Activated CD8-positive, alpha-beta memory T cell treated with anti-CD3 and anti-CD28 coated beads, Interleukin-2, amount 10 ng/mL, durations not matched to agents 7 days and 5 days (primary cell): ENCODE measurements at regions of chr12 and their contacts with region 1.

Region 1: DNA sequence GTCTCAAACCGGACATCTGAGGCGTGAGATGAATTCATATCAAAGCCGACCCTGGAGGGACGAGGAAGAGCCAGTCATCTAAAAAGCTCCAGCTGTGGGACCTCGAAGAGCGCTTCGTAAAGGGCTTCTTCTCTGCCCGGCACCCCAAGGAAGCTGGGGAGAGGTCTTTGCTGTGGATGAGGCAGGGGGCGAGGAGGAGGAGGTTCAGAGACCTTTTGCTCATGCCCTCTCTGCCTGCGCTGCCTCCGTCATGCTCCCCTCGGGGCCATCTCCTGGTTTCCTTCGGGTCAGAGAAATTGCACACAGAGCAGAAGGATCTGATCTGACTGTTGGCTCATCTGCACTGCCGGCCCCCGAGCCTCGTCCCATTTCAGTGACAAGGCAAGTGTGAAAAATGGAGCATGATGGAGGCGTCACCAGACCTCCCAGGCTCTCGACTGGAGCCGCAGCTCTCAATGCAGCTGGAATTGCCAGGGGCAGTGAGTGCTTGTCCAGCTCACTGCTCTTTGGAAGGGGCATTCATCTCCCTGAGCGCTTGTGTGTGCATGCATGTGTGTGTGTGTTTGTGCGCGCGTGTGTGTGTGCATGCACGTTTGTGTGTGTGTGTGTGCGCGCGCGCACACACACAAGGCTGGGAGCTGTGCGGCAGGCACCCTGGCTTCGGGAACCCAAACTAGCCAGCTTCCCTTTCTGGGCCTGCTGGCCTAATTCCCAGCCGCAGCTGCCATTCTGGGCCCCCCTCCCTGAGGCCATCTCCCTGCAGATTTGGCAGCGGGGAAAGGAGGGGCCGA is 9.2 kb downstream of the CABP1 start:
- DNase-seq: no peak
- ATAC-seq: no peak
- H3K4me3 Mint-ChIP-seq: peak overlapping the region; percentile 30
- H3K27ac Mint-ChIP-seq: no peak overlapping the region
- H3K4me1 Mint-ChIP-seq: peaks cover 20% of the 10 kb centered on the region
- H3K27me3 Mint-ChIP-seq: peaks cover 64% of the 10 kb centered on the region

Region 2: DNA sequence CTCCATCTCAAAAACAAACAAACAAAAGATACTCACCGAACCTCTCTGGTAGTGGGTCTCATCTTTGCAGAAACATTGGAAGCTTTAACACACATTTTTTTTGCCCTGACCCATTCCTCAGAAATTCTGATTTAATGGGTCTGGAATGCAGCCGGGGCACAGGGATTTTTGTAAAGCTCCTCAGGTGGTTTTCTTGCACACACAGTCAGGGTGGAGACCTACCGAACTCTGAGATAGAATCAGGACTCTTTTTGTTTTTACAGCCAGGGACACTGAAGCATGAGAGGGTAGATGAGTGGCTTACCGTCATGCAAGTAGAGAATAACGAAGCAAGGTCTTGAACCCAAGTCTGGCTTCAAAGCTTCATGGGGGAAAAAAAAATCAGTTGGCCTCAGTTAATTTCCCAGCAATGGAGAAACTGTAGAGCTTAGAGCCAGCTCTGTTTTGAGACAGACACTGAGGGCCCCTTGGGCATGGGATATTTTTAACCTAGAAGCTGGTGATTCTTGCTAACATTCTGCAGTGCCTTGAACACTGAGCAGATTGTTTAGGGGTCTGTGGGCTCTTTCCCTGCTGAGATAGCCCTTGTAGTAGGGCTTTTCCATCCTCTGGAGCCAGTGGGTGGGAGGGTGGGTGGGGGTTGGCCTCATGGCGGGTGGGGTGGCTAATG is 362.7 kb before region 1 on chr12:
- CTCF ChIA-PET with region 1: no interaction called
- DNase-seq: no peak
- ATAC-seq: no peak
- H3K4me3 Mint-ChIP-seq: no peak overlapping the region
- H3K27ac Mint-ChIP-seq: no peak overlapping the region
- H3K4me1 Mint-ChIP-seq: peaks cover 11% of the 10 kb centered on the region
- H3K27me3 Mint-ChIP-seq: peaks cover 12% of the 10 kb centered on the region

Region 3: DNA sequence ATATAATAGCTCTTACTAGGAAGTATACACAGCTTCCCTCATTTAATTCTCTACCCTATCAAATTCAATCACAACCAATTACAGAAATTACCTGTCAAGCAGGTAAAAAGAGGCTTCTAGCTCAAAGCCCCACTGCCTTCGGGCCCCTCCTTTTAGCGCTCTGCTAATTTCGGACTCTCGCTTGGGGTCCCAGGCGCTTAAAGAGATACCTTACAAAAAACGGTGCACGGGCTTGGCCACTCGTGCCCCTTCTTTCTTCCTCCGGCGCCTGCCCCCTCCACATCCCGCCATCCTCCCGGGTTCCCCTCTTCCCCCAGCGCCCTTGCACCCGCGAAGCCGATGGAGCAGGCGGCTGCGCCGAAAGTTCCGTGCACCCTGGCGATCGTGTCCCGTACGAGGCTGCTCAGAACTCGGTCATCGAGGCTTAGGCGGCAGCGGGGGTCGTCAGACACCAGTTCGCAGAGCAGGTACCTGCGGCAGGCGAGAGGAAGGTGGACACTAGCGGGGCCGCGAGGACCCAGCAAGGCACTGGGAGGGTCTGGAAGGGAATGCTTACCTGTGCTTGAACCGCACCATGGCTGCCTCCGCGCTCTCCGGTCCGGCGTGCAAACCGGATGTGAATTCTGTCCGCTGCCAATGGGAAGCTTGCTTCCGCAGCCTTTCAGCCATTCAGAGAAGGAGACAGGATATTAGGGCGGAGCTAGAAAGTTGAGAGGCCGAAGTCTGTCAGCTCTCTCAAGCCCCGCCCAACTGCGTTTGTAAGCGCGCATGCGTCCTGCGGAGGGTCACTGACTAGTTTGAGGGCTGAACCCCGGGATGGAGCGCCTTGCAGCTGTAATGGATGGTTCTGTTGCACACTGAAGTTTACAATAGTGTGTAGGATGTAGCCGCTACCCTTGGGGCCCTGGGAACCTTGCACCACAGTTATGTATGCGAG is 68.6 kb before region 1 on chr12 and contains the start of gene POP5:
- CTCF ChIA-PET with region 1: interaction called, 114 read pairs
- DNase-seq: peak; percentile 98
- ATAC-seq: peak; percentile 97
- H3K4me3 Mint-ChIP-seq: peak within 1 kb of the TSS; percentile 99
- H3K27ac Mint-ChIP-seq: peak within 1 kb of the TSS; percentile 84
- H3K4me1 Mint-ChIP-seq: peaks cover 34% of the 10 kb centered on the region
- H3K27me3 Mint-ChIP-seq: peaks cover 14% of the 10 kb centered on the region
- total RNA-seq, gene POP5: 63.1 to 65.1 TPM

Region 4: GRCh38 chr12:120662879-120663278 is 13.2 kb after region 1 on chr12:
- CTCF ChIA-PET with region 1: interaction called, 47 read pairs
- DNase-seq: no peak
- ATAC-seq: no peak
- H3K4me3 Mint-ChIP-seq: no peak overlapping the region
- H3K27ac Mint-ChIP-seq: no peak overlapping the region
- H3K4me1 Mint-ChIP-seq: no peaks in the 10 kb centered on the region
- H3K27me3 Mint-ChIP-seq: peaks cover 2% of the 10 kb centered on the region

Region 5: DNA sequence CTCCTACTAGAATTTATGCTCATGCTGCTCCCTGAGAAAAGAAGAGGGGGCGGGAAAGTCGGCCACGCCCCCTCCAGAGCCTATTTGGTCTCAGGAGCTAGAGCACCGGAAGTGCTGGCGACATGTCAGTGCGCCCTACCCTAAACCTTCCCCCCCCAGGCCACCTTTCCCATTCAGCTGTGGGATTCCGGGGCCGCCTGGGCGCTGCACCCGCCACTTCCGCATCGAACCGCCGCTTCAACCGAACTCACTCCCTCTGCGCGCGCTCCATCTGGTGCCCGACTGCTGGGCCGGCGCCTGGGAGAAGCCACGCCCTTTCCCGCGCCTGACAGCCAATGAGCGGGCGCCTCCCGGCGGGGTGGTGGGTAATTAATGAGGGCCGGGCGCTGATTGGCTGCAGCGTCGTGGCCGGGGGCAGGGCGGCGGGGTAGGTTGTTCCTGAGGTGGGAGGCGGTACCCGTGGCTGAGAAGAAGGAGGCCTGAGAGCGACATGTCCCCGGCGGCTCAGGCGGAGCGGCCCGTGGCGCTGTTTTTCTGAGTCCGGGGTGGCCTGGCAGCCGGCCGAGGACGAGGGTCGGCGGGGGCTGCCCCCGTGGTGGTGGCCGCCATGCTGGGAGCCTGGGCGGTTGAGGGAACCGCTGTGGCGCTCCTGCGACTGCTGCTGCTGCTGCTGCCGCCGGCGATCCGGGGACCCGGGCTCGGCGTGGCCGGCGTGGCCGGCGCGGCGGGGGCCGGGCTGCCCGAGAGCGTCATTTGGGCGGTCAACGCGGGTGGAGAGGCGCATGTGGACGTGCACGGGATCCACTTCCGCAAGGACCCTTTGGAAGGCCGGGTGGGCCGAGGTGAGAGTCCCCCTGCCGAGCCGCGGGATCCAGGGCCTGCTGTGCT is 37.3 kb after region 1 on chr12 and contains the start of gene MLEC:
- CTCF ChIA-PET with region 1: interaction called, 55 read pairs
- DNase-seq: peak; percentile 99
- ATAC-seq: peak; percentile 83
- H3K4me3 Mint-ChIP-seq: peak within 1 kb of the TSS; percentile 88
- H3K27ac Mint-ChIP-seq: peak within 1 kb of the TSS; percentile 90
- H3K4me1 Mint-ChIP-seq: peaks cover 51% of the 10 kb centered on the region
- H3K27me3 Mint-ChIP-seq: no peaks in the 10 kb centered on the region
- total RNA-seq, gene MLEC: 74.5 to 96.2 TPM

Region 6: DNA sequence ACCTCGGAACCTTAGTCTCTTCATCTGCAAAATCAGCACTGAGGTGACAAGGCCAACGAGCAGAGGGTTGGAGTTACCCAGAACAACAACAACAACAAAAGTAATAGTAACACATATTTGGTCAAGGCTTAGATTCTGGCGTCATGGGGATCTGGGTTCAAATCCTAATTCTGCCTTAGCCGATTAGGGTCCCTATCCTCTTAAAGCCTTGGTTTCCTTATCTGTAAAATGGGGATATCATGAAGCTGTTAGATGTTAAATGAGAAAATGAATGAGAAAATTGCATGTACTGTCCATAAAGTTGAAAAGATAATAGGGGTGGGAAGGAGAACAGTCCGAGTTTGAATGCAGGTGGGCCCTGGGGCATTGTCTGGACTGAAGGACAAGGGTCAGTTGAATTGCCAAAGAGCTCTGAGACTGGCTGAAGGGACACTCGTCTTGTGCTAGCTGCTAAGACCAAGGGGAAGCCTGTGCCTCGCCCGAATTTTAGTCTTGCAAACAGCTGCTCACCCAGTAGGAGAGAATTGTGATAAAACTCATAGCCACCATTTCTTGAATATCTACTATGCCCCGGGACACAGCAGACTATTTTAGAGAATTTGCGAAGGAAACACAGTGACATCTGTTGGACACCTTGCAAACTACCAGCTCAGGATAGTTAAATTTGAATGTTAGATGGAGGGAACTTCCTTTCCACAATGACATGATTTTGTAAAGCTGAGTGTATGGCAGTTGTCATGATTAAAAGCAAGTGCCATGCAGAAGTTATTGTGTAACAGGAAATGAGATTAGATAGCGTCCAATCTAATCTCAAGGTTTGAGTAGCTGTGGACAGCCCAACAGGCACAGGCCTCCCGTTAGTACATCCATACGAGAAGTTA is 321.9 kb after region 1 on chr12:
- CTCF ChIA-PET with region 1: interaction called, 52 read pairs
- DNase-seq: peak; percentile 62
- ATAC-seq: peak; percentile 91
- H3K4me3 Mint-ChIP-seq: no peak overlapping the region
- H3K27ac Mint-ChIP-seq: no peak overlapping the region
- H3K4me1 Mint-ChIP-seq: peaks cover 9% of the 10 kb centered on the region
- H3K27me3 Mint-ChIP-seq: no peaks in the 10 kb centered on the region